Activated CD8-positive, alpha-beta memory T cell treated with anti-CD3 and anti-CD28 coated beads, Interleukin-2, amount 10 ng/mL, durations not matched to agents 7 days and 5 days (primary cell): ENCODE measurements at regions of chr19 and their contacts with region 1.

Region 1: GRCh38 chr19:35140962-35141637 is 2.0 kb upstream of the FXYD7 start:
- DNase-seq: peak; percentile 96
- ATAC-seq: peak; percentile 91
- H3K4me3 Mint-ChIP-seq: peak overlapping the region; percentile 72
- H3K27ac Mint-ChIP-seq: peak overlapping the region; percentile 54
- H3K4me1 Mint-ChIP-seq: peaks cover 25% of the 10 kb centered on the region
- H3K27me3 Mint-ChIP-seq: peaks cover 30% of the 10 kb centered on the region

Region 2: DNA sequence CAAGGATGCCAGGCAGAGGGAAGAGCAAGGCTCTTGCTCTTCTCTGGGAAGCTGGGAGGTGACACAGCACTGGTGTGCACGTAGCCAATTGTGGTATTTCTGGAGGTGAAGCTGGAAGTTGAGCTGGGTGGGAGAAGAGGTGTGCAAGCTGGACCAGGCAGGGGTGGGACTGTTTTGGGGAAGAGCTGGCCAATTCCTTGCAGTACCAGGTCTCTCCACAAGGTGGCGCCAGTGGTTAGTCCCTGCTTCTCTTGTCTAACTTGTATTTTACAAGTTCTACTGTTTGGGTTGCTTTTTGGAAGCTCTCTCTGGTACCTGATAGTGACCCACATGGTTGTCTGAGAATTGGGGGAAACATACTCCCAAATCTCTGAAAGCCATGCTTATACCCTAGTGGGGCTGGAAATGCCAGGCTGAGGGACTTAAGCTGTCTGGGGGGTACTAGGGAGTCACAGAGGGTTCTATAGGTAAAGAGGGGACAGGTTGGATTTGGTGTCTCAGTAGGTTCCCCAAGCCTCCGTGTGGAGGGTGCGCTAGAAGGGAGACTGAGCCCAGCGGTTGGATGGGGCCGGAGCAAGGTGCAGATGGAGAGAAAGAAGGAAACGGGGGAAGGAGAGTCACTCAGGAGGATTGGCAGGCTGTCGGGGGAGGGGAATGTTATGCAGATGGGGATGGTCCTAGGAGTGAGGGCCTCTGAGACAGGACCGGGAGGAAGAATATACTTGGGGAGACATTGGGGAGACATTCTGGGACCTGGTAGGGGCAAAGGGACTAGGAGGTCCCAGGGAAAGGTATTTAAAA is 96.6 kb before region 1 on chr19:
- CTCF ChIA-PET with region 1: interaction called, 12 read pairs
- DNase-seq: peak; percentile 66
- ATAC-seq: no peak
- H3K4me3 Mint-ChIP-seq: no peak overlapping the region
- H3K27ac Mint-ChIP-seq: no peak overlapping the region
- H3K4me1 Mint-ChIP-seq: peaks cover 17% of the 10 kb centered on the region
- H3K27me3 Mint-ChIP-seq: peaks cover 10% of the 10 kb centered on the region

Region 3: GRCh38 chr19:35154525-35155406 is 13.7 kb after region 1 on chr19 and contains the start of gene FXYD5:
- CTCF ChIA-PET with region 1: interaction called, 90 read pairs
- DNase-seq: peak; percentile 80
- ATAC-seq: peak; percentile 79
- H3K4me3 Mint-ChIP-seq: peak within 1 kb of the TSS; percentile 97
- H3K27ac Mint-ChIP-seq: peak within 1 kb of the TSS; percentile 97
- H3K4me1 Mint-ChIP-seq: peaks cover 42% of the 10 kb centered on the region
- H3K27me3 Mint-ChIP-seq: peaks cover 4% of the 10 kb centered on the region
- total RNA-seq, gene FXYD5: 262 to 354 TPM

Region 4: DNA sequence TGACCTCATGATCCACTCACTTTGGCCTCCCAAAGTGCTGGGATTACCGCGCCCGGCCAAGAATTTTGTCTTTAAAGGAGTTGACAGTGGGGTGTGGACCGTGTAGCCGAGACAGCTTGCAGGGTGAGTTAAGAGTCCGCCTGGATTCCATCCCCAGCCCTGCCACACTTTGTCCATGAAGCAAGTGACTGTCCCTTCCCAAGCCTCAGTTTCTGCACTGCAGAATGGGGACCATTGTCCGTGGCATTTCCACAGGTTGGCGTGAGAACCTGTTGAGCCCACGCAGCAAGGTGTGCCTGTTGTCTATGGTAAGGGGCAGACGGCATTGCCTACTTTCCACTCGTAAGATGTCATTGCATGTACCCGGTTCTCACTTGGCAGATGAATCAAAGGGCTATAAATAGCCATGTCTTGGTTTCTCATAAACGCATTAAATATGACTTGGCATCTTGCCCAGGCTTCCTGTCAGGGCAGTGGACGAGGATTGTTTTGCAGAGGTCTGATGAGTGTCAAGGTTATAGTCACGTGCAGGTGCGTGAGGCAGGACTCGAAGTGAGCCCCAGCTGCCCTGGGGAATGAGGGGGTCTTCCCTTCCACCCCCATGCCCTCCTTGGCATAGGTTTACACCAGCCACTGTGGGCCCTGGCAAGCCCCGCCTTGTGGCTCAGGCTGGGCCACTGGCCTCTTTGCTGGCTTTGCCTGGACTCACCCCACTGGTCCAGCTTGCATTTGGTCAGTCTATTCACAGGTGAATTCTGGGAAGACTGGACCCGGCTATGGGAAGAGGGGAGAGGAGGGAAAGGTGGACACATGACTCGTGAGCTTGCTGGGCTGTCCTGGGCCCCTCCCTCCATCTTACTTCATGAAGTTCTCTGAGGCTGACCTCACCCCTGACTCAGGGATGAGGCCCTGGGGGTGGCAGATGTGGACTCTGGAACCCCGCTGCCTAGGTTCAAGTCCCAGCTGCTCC is 72.8 kb after region 1 on chr19:
- CTCF ChIA-PET with region 1: interaction called, 45 read pairs
- DNase-seq: peak; percentile 84
- ATAC-seq: peak; percentile 45
- H3K4me3 Mint-ChIP-seq: no peak overlapping the region
- H3K27ac Mint-ChIP-seq: peak overlapping the region; percentile 98
- H3K4me1 Mint-ChIP-seq: peaks cover 64% of the 10 kb centered on the region
- H3K27me3 Mint-ChIP-seq: no peaks in the 10 kb centered on the region

Region 5: DNA sequence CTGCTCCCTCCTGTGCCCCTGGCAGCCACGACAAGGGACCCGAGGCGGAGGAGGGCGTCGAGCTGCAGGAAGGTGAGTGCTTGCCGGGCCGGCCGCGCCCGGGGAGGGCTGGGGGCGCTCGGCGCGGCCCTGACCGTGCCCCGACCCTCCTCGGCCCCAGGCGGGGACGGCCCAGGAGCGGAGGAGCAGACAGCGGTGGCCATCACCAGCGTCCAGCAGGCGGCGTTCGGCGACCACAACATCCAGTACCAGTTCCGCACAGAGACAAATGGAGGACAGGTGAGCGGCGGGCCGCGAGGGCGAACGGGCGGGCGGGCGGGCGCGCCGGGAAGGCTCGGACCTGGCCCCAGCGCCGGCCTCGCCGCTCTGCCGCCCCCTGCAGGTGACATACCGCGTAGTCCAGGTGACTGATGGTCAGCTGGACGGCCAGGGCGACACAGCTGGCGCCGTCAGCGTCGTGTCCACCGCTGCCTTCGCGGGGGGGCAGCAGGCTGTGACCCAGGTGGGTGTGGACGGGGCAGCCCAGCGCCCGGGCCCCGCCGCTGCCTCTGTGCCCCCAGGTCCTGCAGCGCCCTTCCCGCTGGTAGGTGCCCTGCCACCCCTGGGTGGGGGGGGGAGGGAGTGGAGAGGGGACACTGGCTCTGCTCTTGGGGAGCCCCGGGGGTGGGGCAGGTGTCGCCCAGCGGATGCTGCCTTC is 128.5 kb after region 1 on chr19:
- CTCF ChIA-PET with region 1: interaction called, 16 read pairs
- DNase-seq: peak; percentile 86
- ATAC-seq: peak; percentile 63
- H3K4me3 Mint-ChIP-seq: peak overlapping the region; percentile 62
- H3K27ac Mint-ChIP-seq: peak overlapping the region; percentile 54
- H3K4me1 Mint-ChIP-seq: peaks cover 19% of the 10 kb centered on the region
- H3K27me3 Mint-ChIP-seq: no peaks in the 10 kb centered on the region